ENCODE measurements at regions of chr2 and their contacts with region 1.

Region 1: DNA sequence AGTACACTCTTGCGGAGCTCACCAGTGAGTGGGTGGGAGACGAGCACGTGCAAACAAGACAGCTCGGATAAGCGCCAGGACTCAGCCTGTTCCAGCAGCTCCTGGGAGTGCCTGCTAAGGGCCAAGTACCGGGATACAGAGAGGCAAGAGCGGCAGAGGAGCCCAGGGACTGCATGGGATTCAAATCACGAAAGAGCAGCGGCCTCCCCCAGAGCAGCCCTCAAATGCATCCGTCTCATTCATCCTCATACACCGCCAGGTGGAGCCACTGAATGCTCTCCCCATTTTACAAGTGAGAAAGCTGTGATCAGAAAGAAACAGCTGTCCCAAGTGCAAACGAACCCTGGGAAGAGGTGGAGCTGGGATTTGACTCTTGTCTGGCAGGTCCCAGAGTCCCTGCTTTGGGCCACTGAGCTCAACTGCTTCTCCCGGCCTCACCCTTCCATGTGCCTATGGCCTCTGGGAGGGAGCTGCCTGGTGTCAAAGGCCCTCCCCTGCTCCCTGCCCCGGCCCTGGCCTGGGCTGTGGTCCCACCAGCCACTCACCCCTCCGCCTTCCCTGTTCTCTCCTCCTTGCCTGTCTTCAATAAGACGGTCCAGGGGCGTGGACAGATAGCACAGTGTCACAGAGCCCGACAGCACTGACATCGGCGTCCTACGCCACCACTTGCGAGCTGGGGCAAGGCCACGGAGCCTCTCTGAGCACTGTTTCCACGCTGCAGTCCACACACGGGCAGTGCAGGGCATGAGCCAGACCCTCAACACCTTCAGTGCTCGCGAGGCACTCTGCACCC is 72.8 kb upstream of the TAF1B start:
- DNase-seq: peak in 1 of 2 donors; percentile 74
- ATAC-seq: peak; percentile 37 to 66 (median 52)
- H3K4me3 ChIP-seq: peak overlapping the region in 3 of 10 donors; percentile 6 to 19 (median 10)
- H3K27ac ChIP-seq: peak overlapping the region in 9 of 10 donors; percentile 13 to 84 (median 74)
- H3K4me1 ChIP-seq: peaks cover 17 to 75% (median 38%) of the 10 kb centered on the region in 9 donors
- H3K27me3 ChIP-seq: no peaks in the 10 kb centered on the region
- CTCF ChIP-seq: peak; percentile 51 to 84 (median 72)

Region 2: DNA sequence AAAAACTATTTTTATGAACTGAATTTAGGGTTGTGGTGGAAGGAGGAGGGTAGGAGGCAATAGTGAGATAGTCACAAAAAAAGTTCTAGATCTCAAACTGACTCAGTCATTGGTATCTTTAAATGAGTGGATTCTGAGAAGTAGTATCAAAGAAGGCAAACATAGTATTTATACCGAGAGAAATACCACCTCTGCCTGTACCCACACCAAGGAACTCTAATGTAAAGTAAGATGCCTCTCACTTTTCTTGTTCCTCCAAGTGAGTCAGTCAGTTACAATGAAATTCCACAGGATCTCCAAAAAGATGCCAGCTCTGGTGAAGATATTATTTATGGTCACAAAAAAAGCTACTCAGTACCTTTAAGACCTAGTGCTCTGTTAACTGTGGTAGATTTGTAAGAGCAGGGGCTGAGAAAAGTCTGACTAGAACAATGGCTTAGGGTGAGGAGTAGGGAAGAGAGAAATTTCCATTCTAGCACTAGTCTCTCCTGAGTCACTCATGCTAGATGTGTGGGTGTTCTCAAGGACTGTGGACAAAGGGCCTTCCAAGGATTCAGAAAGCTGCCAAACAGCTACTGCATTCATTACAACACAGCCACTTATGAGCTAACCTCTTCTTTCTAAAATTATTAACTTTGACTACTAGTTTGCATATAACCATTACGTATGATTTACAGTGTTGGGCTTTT is 176.0 kb before region 1 on chr2:
- intact Hi-C with region 1: no loop called
- DNase-seq: peak in 1 of 2 donors; percentile 33
- ATAC-seq: peak; percentile 67 to 96 (median 87)
- H3K4me3 ChIP-seq: no peak overlapping the region
- H3K27ac ChIP-seq: peak overlapping the region in 5 of 10 donors; percentile 31 to 64 (median 38)
- H3K4me1 ChIP-seq: peaks cover 8 to 53% (median 44%) of the 10 kb centered on the region in 9 donors
- H3K27me3 ChIP-seq: no peaks in the 10 kb centered on the region
- CTCF ChIP-seq: no peak

Region 3: GRCh38 chr2:9638532-9638931 is 132.0 kb before region 1 on chr2:
- intact Hi-C with region 1: loop called in 2 of 10 experiments (anchors 5 to 10 kb)
- DNase-seq: peak; percentile 81 to 82
- ATAC-seq: peak; percentile 85 to 96 (median 94)
- H3K4me3 ChIP-seq: peak overlapping the region in 1 of 10 donors; percentile 7
- H3K27ac ChIP-seq: peak overlapping the region in 8 of 10 donors; percentile 2 to 61 (median 49)
- H3K4me1 ChIP-seq: peaks cover 3 to 29% (median 23%) of the 10 kb centered on the region in 9 donors
- H3K27me3 ChIP-seq: no peaks in the 10 kb centered on the region
- CTCF ChIP-seq: no peak

Region 4: DNA sequence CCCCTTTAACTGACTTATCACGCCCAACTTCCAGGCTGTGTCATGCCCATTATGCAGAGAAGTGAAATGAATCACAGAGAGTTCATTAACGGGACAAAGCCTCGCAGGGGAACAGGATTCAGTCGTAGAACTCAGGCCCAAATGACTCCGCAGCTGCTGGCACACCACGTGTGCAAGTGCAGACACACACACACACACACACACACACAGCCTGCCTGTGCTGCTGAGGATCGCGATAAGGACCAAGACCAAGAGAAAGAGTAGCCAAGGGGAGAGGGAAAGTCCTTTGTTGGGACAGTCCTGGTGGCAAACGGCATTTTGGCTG is 17.3 kb before region 1 on chr2:
- intact Hi-C with region 1: no loop called
- DNase-seq: no peak
- ATAC-seq: peak; percentile 16 to 76 (median 47)
- H3K4me3 ChIP-seq: peak overlapping the region in 2 of 10 donors; percentile 7
- H3K27ac ChIP-seq: peak overlapping the region in 3 of 10 donors; percentile 20 to 79 (median 54)
- H3K4me1 ChIP-seq: peaks cover 6 to 49% (median 30%) of the 10 kb centered on the region in 9 donors
- H3K27me3 ChIP-seq: peaks cover 0 to 21% (median 0%) of the 10 kb centered on the region in 7 donors
- CTCF ChIP-seq: no peak

Region 5: GRCh38 chr2:10141736-10142642 is 371.5 kb after region 1 on chr2:
- intact Hi-C with region 1: no loop called
- DNase-seq: peak in 1 of 2 donors; percentile 38
- ATAC-seq: peak in 5 of 8 donors; percentile 32 to 59 (median 49)
- H3K4me3 ChIP-seq: no peak overlapping the region
- H3K27ac ChIP-seq: no peak overlapping the region
- H3K4me1 ChIP-seq: peaks cover 0 to 17% (median 9%) of the 10 kb centered on the region in 9 donors
- H3K27me3 ChIP-seq: no peaks in the 10 kb centered on the region
- CTCF ChIP-seq: peak; percentile 24 to 63 (median 56)

Measured in heart right ventricle (tissue), 16 donors.